ENCODE measurements at regions of chr4 and their contacts with region 1.

Region 1: GRCh38 chr4:15396157-15396800 is 31.6 kb upstream of the C1QTNF7 start:
- DNase-seq: no peak
- H3K4me3 ChIP-seq: no peak overlapping the region
- H3K27ac ChIP-seq: no peak overlapping the region
- H3K4me1 ChIP-seq: peaks cover 10% of the 10 kb centered on the region; the same call in 1 of the 2 replicates
- H3K27me3 ChIP-seq: no peaks in the 10 kb centered on the region
- CTCF ChIP-seq: peak; percentile 61

Region 2: DNA sequence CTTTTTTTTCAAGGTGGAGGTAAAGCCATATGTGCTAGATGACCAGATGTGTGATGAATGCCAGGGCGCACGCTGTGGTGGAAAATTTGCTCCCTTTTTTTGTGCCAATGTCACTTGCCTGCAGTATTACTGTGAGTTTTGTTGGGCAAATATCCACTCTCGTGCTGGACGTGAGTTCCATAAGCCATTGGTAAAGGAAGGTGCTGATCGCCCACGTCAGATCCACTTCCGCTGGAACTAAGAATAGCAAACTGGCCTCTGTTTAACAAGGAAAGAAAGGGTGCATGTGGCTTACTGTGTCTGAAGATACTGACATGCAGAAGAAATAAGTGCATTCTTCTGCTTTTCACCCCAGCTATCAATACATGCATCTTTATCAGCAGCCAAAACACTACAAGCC is 330.1 kb before region 1 on chr4:
- CTCF ChIA-PET with region 1: no interaction called
- POLR2A ChIA-PET with region 1: no interaction called
- intact Hi-C with region 1: no loop called
- DNase-seq: no peak
- H3K4me3 ChIP-seq: no peak overlapping the region
- H3K27ac ChIP-seq: no peak overlapping the region
- H3K4me1 ChIP-seq: no peaks in the 10 kb centered on the region
- H3K27me3 ChIP-seq: no peaks in the 10 kb centered on the region
- CTCF ChIP-seq: no peak

Region 3: GRCh38 chr4:15231265-15232091 is 164.8 kb before region 1 on chr4:
- CTCF ChIA-PET with region 1: interaction called, 3 read pairs
- POLR2A ChIA-PET with region 1: no interaction called
- intact Hi-C with region 1: loop called (anchors 1 kb)
- DNase-seq: peak in 1 of 2 experiments; percentile 61
- H3K4me3 ChIP-seq: no peak overlapping the region
- H3K27ac ChIP-seq: no peak overlapping the region
- H3K4me1 ChIP-seq: no peaks in the 10 kb centered on the region
- H3K27me3 ChIP-seq: no peaks in the 10 kb centered on the region
- CTCF ChIP-seq: peak; percentile 73

Region 4: DNA sequence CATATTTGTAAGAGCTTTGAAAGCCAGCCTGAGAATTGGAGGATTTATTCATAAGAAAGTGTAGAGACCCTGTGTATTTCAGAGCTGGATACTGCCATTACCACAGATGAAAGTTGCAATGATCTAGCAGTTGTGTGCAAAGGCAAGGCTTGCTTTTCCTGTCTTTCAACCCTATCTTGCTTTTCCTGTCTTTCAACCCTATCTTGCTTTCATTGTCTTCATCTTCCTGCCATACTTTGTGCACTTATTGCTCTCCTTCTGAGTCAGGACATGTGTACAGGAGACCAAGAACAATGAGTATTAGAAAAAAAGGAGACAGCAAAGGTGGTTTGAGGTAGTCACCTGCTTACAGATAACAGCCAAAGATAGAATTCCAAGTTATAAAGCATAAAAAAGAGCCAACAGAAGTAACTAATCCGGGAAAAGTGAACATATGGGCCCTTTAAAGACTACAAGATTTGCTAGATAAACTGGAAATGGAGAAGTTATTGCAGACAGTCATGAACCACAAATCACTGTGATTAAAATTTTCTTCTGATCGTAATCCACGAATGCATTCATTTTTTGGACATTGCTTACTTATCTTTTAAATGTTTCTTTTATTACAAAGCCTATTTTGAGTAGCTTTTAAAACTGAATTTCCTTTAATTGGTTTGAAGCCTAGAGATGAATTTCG is 48.7 kb after region 1 on chr4:
- CTCF ChIA-PET with region 1: no interaction called
- POLR2A ChIA-PET with region 1: no interaction called
- intact Hi-C with region 1: loop called (anchors 2 kb)
- DNase-seq: peak; percentile 15 to 43
- H3K4me3 ChIP-seq: no peak overlapping the region
- H3K27ac ChIP-seq: no peak overlapping the region
- H3K4me1 ChIP-seq: no peaks in the 10 kb centered on the region
- H3K27me3 ChIP-seq: no peaks in the 10 kb centered on the region
- CTCF ChIP-seq: no peak

Measured in PC-9 (cell line).